CD4-positive, alpha-beta T cell (primary cell): ENCODE measurements at regions of chr2 and their contacts with region 1.

Region 1: GRCh38 chr2:39124000-39124745 is 3.3 kb upstream of the SOS1 start:
- DNase-seq: peak; percentile 89 to 98 (median 94)
- ATAC-seq: peak; percentile 74
- H3K4me3 ChIP-seq: peak overlapping the region; percentile 83
- H3K4me3 Mint-ChIP-seq: peak overlapping the region; percentile 96
- H3K27ac ChIP-seq: peak overlapping the region; percentile 88 to 89
- H3K27ac Mint-ChIP-seq: peak overlapping the region; percentile 99
- H3K4me1 ChIP-seq: peaks cover 50% of the 10 kb centered on the region
- H3K4me1 Mint-ChIP-seq: peaks cover 63% of the 10 kb centered on the region
- H3K27me3 ChIP-seq: no peaks in the 10 kb centered on the region
- H3K27me3 Mint-ChIP-seq: no peaks in the 10 kb centered on the region
- CTCF ChIP-seq: peak; percentile 67

Region 2: DNA sequence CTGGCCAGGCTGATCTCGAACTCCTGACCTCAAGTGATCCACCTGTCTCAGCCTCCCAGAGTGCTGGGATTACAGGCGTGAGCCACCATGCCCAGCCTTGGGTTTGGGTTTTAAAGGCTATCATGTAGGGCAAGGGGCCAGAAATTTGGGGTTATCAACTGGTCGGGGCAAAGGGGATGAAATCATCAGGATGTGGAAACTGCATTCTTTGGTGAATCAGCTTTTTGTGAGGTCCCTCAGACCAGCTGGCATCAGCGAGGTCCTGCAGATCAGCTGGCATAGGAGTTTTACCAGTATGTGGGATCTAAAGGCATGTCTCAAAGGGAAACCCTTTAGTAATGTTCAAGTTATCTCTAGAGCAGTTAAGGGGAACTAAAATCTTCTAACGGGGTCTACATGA is 352.5 kb before region 1 on chr2:
- CTCF ChIA-PET with region 1: no interaction called
- POLR2A ChIA-PET with region 1: no interaction called
- intact Hi-C with region 1: loop called in 1 of 2 experiments (anchors 10 kb)
- DNase-seq: no peak
- ATAC-seq: no peak
- H3K4me3 ChIP-seq: no peak overlapping the region
- H3K4me3 Mint-ChIP-seq: no peak overlapping the region
- H3K27ac ChIP-seq: no peak overlapping the region
- H3K27ac Mint-ChIP-seq: no peak overlapping the region
- H3K4me1 ChIP-seq: no peaks in the 10 kb centered on the region
- H3K4me1 Mint-ChIP-seq: no peaks in the 10 kb centered on the region
- H3K27me3 ChIP-seq: no peaks in the 10 kb centered on the region
- H3K27me3 Mint-ChIP-seq: peaks cover 16% of the 10 kb centered on the region
- CTCF ChIP-seq: no peak

Region 3: GRCh38 chr2:39135690-39136259 is 11.6 kb after region 1 on chr2:
- CTCF ChIA-PET with region 1: interaction called, 5 read pairs
- POLR2A ChIA-PET with region 1: interaction called, 49 read pairs
- intact Hi-C with region 1: no loop called
- DNase-seq: peak in 2 of 14 experiments; percentile 35 to 47
- ATAC-seq: peak; percentile 48
- H3K4me3 ChIP-seq: no peak overlapping the region
- H3K4me3 Mint-ChIP-seq: peak overlapping the region; percentile 64
- H3K27ac ChIP-seq: peak overlapping the region in 1 of 2 donors; percentile 45
- H3K27ac Mint-ChIP-seq: peak overlapping the region; percentile 74
- H3K4me1 ChIP-seq: peaks cover 33% of the 10 kb centered on the region
- H3K4me1 Mint-ChIP-seq: peaks cover 50% of the 10 kb centered on the region
- H3K27me3 ChIP-seq: no peaks in the 10 kb centered on the region
- H3K27me3 Mint-ChIP-seq: no peaks in the 10 kb centered on the region
- CTCF ChIP-seq: no peak

Region 4: DNA sequence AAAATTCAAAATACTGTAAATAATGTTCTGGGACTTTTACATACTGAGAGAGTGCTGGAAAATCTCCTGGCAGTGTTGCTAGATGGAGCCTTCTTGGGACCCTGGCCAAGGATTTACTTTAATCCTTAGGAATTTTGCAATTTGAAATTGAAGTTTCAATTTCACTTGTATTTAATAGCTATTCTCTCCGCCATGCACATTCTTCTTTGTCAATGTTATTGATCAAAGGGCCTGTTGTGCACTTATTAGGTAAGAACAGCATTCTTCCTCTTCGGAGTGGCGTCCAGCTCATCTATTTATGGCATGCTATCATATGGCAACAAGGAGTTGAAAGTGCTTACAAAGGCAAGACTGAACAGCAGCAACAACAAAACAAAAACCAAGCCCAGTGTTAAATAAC is 36.8 kb after region 1 on chr2:
- CTCF ChIA-PET with region 1: no interaction called
- POLR2A ChIA-PET with region 1: no interaction called
- intact Hi-C with region 1: no loop called
- DNase-seq: no peak
- ATAC-seq: no peak
- H3K4me3 ChIP-seq: no peak overlapping the region
- H3K4me3 Mint-ChIP-seq: no peak overlapping the region
- H3K27ac ChIP-seq: no peak overlapping the region
- H3K27ac Mint-ChIP-seq: no peak overlapping the region
- H3K4me1 ChIP-seq: no peaks in the 10 kb centered on the region
- H3K4me1 Mint-ChIP-seq: no peaks in the 10 kb centered on the region
- H3K27me3 ChIP-seq: no peaks in the 10 kb centered on the region
- H3K27me3 Mint-ChIP-seq: no peaks in the 10 kb centered on the region
- CTCF ChIP-seq: no peak

Region 5: GRCh38 chr2:39216346-39217191 is 92.4 kb after region 1 on chr2:
- CTCF ChIA-PET with region 1: interaction called, 3 read pairs
- POLR2A ChIA-PET with region 1: interaction called, 99 read pairs
- intact Hi-C with region 1: loop called in 1 of 2 experiments (anchors 2 kb)
- DNase-seq: peak; percentile 51 to 94 (median 66)
- ATAC-seq: peak; percentile 86
- H3K4me3 ChIP-seq: no peak overlapping the region
- H3K4me3 Mint-ChIP-seq: peak overlapping the region; percentile 64
- H3K27ac ChIP-seq: peak overlapping the region; percentile 49 to 69
- H3K27ac Mint-ChIP-seq: peak overlapping the region; percentile 59
- H3K4me1 ChIP-seq: peaks cover 43% of the 10 kb centered on the region
- H3K4me1 Mint-ChIP-seq: peaks cover 33% of the 10 kb centered on the region
- H3K27me3 ChIP-seq: no peaks in the 10 kb centered on the region
- H3K27me3 Mint-ChIP-seq: no peaks in the 10 kb centered on the region
- CTCF ChIP-seq: no peak

Region 6: GRCh38 chr2:39416140-39416539 is 292.0 kb after region 1 on chr2:
- CTCF ChIA-PET with region 1: no interaction called
- POLR2A ChIA-PET with region 1: no interaction called
- intact Hi-C with region 1: no loop called
- DNase-seq: no peak
- ATAC-seq: no peak
- H3K4me3 ChIP-seq: no peak overlapping the region
- H3K4me3 Mint-ChIP-seq: no peak overlapping the region
- H3K27ac ChIP-seq: no peak overlapping the region
- H3K27ac Mint-ChIP-seq: no peak overlapping the region
- H3K4me1 ChIP-seq: no peaks in the 10 kb centered on the region
- H3K4me1 Mint-ChIP-seq: peaks cover 57% of the 10 kb centered on the region
- H3K27me3 ChIP-seq: no peaks in the 10 kb centered on the region
- H3K27me3 Mint-ChIP-seq: no peaks in the 10 kb centered on the region
- CTCF ChIP-seq: no peak

Region 7: GRCh38 chr2:39436592-39437510 is 312.7 kb after region 1 on chr2 and contains the start of gene MAP4K3:
- CTCF ChIA-PET with region 1: no interaction called
- POLR2A ChIA-PET with region 1: interaction called, 7 read pairs
- intact Hi-C with region 1: loop called in 1 of 2 experiments (anchors 10 kb)
- DNase-seq: peak; percentile 43 to 87 (median 64)
- ATAC-seq: peak; percentile 47
- H3K4me3 ChIP-seq: peak within 1 kb of the TSS; percentile 68
- H3K4me3 Mint-ChIP-seq: peak within 1 kb of the TSS; percentile 97
- H3K27ac ChIP-seq: no peak within 1 kb of the TSS
- H3K27ac Mint-ChIP-seq: peak within 1 kb of the TSS; percentile 79
- H3K4me1 ChIP-seq: peaks cover 18% of the 10 kb centered on the region
- H3K4me1 Mint-ChIP-seq: peaks cover 57% of the 10 kb centered on the region
- H3K27me3 ChIP-seq: no peaks in the 10 kb centered on the region
- H3K27me3 Mint-ChIP-seq: no peaks in the 10 kb centered on the region
- CTCF ChIP-seq: no peak
- total RNA-seq, gene MAP4K3: 18.4 to 22.5 TPM